ENCODE measurements at regions of chr1 and their contacts with region 1.

Region 1: DNA sequence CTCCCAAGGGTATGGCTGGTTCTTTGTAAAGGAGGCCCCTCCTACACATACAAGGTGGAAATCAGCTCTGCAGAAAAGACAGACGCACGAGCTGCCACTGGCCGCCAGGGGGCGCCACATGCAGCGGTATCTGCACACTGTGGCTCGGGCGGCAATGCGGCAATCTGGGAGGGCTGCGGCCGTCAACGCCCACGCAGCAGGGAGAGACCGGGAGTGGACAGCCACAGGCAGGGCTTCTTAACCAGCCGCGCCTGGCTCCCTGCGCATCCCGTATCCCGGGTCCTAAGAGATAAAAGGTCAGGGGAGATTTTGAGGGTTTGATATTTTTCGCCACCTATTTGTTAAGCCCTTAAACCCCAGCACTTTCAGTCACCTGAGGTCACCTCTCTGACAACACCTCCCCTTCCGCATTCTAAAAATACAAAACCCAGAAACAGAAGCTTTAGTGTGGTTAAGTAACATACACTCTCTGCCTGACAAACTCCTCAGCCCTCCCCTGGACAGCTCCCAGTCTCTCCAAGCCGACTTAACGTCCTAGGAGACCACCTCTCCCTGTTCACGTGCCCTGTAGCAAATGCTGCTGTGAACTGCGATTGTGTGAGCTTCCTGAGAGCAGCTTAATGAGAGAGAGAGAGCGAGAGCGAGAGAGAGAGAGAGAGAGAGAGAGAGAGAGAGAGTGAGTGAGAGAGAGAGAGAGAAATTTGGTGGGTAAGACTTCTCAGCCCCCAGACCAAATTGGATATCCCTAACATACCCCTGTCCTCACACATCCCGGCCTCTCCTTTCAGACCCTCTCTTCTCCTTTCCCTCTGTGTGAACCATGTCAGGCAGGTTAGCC is 13.5 kb upstream of the KCNA2 start:
- DNase-seq: peak; percentile 89
- ATAC-seq: peak; percentile 85
- H3K4me3 Mint-ChIP-seq: peak overlapping the region; percentile 59
- H3K27ac Mint-ChIP-seq: no peak overlapping the region
- H3K4me1 Mint-ChIP-seq: peaks cover 6% of the 10 kb centered on the region; the same call in 1 of the 2 replicates
- H3K27me3 Mint-ChIP-seq: peaks cover 39% of the 10 kb centered on the region
- CTCF ChIP-seq: peak; percentile 97

Region 2: DNA sequence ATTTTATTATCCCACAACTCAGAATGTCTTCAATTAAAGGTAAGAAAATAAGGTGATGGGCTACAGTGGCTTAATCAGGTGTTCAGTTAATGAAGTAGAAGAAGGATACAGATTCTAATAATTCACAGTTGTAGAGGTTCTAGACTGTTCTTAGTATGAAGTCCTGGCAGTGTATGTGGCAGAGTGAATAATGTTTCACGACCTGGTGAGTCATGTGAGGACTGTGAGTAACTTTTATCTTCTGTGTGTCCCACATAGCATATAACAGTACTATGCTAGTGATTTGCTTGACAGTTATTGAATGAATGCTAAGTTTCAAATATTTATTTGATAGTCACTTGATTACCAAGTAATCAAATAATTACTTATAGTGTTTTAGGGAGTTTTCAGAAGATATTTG is 248.8 kb before region 1 on chr1:
- CTCF ChIA-PET with region 1: no interaction called
- POLR2A ChIA-PET with region 1: no interaction called
- DNase-seq: no peak
- ATAC-seq: no peak
- H3K4me3 Mint-ChIP-seq: no peak overlapping the region
- H3K27ac Mint-ChIP-seq: no peak overlapping the region
- H3K4me1 Mint-ChIP-seq: no peaks in the 10 kb centered on the region
- H3K27me3 Mint-ChIP-seq: no peaks in the 10 kb centered on the region
- CTCF ChIP-seq: no peak

Region 3: GRCh38 chr1:110524311-110525251 is 95.0 kb before region 1 on chr1:
- CTCF ChIA-PET with region 1: interaction called, 60 read pairs
- POLR2A ChIA-PET with region 1: no interaction called
- DNase-seq: peak; percentile 81
- ATAC-seq: peak; percentile 96
- H3K4me3 Mint-ChIP-seq: no peak overlapping the region
- H3K27ac Mint-ChIP-seq: no peak overlapping the region
- H3K4me1 Mint-ChIP-seq: no peaks in the 10 kb centered on the region
- H3K27me3 Mint-ChIP-seq: peaks cover 4% of the 10 kb centered on the region
- CTCF ChIP-seq: peak; percentile 88

Region 4: DNA sequence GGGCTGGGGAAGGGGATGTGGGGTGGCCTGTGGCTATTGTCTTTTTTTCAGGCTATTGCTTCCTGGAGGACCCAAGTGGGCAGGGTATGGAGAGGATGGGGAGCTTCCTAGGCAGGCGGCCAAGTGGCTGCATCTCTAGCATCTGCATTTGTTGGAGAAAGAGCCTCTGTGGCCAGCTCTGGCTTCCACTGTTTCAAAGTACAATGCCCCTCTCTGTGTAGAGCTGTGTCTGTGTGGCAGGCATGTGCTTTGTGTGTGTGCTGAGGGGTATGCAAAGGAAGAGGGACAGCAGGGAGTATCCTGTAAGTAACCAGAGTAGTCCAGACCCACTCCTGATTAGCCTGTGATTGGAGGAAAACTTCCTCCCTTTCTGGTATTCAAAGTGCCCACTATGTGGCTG is 54.1 kb before region 1 on chr1:
- CTCF ChIA-PET with region 1: interaction called, 12 read pairs
- POLR2A ChIA-PET with region 1: no interaction called
- DNase-seq: no peak
- ATAC-seq: peak; percentile 67
- H3K4me3 Mint-ChIP-seq: no peak overlapping the region
- H3K27ac Mint-ChIP-seq: no peak overlapping the region
- H3K4me1 Mint-ChIP-seq: peaks cover 10% of the 10 kb centered on the region
- H3K27me3 Mint-ChIP-seq: peaks cover 21% of the 10 kb centered on the region
- CTCF ChIP-seq: no peak

Region 5: GRCh38 chr1:110638058-110638457 is 18.4 kb after region 1 on chr1:
- CTCF ChIA-PET with region 1: interaction called, 20 read pairs
- POLR2A ChIA-PET with region 1: no interaction called
- DNase-seq: no peak
- ATAC-seq: peak; percentile 67
- H3K4me3 Mint-ChIP-seq: no peak overlapping the region
- H3K27ac Mint-ChIP-seq: no peak overlapping the region
- H3K4me1 Mint-ChIP-seq: no peaks in the 10 kb centered on the region
- H3K27me3 Mint-ChIP-seq: peaks cover 7% of the 10 kb centered on the region; the same call in 1 of the 2 replicates
- CTCF ChIP-seq: no peak

Region 6: DNA sequence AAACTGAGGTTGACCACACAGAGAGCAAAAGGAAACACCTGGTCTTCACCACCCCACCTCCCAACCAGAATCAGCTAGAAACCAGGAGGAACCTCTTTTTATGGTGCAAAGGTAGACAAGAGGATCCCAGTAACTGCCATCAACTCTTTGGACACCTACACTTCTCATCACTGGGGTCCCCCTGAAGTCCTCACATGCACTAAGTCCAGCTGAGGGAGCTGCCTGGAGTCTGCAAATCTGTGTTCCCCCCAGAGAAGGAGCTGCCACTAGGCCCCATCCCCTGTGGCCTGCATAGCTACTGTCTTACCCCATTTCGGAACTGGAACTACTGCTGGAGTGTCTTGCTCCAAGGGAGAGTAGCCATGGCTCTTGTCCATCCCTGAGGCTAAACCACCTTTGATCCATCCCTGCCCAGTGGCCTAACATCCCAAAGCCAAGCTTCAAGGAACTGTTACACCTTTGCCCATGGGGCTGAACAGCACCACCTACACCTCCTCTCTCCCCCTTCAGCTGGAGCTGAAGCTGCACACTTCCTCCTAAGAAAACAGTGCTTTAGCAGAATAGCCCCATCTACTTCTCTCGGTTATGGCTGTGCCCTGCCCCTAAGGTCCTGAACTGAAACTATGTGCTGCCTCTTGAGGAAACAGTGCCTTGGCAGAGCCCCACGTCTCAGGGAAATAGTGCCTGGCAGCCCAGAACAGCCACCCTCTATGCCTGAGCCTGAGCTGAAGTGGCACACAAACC is 167.9 kb after region 1 on chr1:
- CTCF ChIA-PET with region 1: interaction called, 135 read pairs
- POLR2A ChIA-PET with region 1: no interaction called
- DNase-seq: no peak
- ATAC-seq: no peak
- H3K4me3 Mint-ChIP-seq: no peak overlapping the region
- H3K27ac Mint-ChIP-seq: no peak overlapping the region
- H3K4me1 Mint-ChIP-seq: no peaks in the 10 kb centered on the region
- H3K27me3 Mint-ChIP-seq: peaks cover 40% of the 10 kb centered on the region
- CTCF ChIP-seq: no peak

Region 7: GRCh38 chr1:110816930-110817329 is 197.3 kb after region 1 on chr1:
- CTCF ChIA-PET with region 1: no interaction called
- POLR2A ChIA-PET with region 1: no interaction called
- DNase-seq: no peak
- ATAC-seq: no peak
- H3K4me3 Mint-ChIP-seq: no peak overlapping the region
- H3K27ac Mint-ChIP-seq: no peak overlapping the region
- H3K4me1 Mint-ChIP-seq: no peaks in the 10 kb centered on the region
- H3K27me3 Mint-ChIP-seq: peaks cover 43% of the 10 kb centered on the region
- CTCF ChIP-seq: no peak

Measured in WTC11 (cell line).